Mammary epithelial cell (primary cell): ENCODE measurements at regions of chr1 and their contacts with region 1.

Region 1: GRCh38 chr1:74771913-74772515 is 39.1 kb downstream of the TYW3 start:
- DNase-seq: peak; percentile 30
- H3K4me3 ChIP-seq: no peak overlapping the region
- H3K27ac ChIP-seq: no peak overlapping the region
- H3K4me1 ChIP-seq: no peaks in the 10 kb centered on the region
- H3K27me3 ChIP-seq: no peaks in the 10 kb centered on the region
- CTCF ChIP-seq: peak; percentile 48 to 74

Region 2: DNA sequence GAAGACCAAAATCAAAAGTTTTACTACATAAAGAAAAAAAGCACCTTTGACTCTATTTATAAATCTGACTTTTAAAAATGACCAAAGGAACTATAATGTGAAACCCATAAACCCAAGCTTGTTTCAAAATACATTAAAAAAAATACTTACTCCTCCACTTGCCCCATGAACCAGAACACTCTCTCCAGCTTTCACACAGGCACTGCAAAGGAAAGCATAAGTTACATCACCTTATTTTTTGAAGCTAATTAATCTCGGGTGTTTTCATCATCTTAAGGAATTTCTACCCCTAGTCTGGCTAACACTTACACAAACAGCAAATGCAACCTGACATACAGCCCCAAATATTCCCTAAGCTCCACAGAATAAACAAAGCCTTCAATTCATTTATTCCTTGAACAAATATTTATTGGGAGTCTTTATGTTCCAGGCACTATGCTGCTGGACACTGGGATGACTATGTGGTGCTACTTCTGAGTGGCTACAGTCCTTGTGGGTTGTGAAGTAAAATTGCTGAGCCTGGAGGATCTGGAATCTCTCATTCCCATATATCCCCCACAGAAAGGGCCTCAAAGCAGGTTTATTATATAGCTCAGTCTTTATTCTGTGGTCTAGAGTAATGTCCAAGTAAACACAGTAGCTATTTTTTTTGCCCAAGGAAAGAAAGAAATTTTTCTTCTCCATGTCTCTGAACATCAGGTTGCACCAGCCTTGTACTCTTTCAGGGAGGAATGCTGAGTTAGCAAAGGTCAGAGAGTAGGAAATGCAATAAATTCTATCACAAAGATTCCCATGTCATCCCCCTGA is 57.4 kb before region 1 on chr1:
- CTCF ChIA-PET with region 1: no interaction called
- dilution Hi-C with region 1: no loop called
- in situ Hi-C with region 1: no loop called
- intact Hi-C with region 1: no loop called
- DNase-seq: no peak
- H3K4me3 ChIP-seq: no peak overlapping the region
- H3K27ac ChIP-seq: no peak overlapping the region
- H3K4me1 ChIP-seq: no peaks in the 10 kb centered on the region
- H3K27me3 ChIP-seq: no peaks in the 10 kb centered on the region
- CTCF ChIP-seq: no peak

Region 3: GRCh38 chr1:75188892-75189291 is 416.9 kb after region 1 on chr1:
- CTCF ChIA-PET with region 1: no interaction called
- dilution Hi-C with region 1: loop called (anchors 25 kb)
- in situ Hi-C with region 1: no loop called
- intact Hi-C with region 1: no loop called
- DNase-seq: no peak
- H3K4me3 ChIP-seq: no peak overlapping the region
- H3K27ac ChIP-seq: no peak overlapping the region
- H3K4me1 ChIP-seq: no peaks in the 10 kb centered on the region
- H3K27me3 ChIP-seq: no peaks in the 10 kb centered on the region
- CTCF ChIP-seq: no peak

Region 4: DNA sequence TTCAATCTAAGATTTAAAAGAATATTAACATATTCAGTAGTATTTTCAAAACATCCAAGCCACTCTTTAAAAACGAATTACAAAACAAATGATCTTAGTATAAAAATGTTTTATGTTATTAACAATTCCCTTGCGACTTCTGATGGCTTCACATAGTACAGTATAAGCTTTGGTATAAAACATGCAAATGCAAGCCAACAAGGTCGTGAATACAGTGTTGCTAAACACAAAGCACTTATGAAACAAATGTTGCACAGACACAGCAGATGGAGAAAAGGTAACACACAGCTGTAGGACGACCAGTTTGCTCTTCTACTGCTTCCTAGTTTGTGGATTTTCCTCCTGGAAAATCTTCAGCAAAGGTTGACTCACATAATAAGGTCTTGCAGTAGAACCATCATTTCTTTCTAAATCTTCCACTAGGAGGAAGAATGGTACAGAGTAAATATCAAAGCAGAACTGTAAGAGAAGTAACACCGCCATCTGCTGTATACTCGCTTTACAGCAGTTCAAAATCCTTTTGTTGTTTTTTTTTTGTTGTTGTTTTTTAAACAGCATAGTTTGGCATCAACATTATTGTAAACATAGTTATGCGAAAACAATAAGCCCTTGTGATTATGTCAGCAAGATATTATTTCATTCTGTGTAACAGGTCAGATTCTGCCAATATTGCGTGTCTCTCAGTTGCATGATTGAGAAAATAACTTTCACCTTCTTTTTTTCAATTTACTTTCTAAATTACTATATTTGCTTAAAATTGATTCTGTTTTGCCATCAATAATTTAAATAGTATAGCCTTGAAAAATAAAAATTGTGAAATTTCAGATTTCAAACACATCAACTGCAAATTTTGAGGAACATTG is 431.6 kb after region 1 on chr1:
- CTCF ChIA-PET with region 1: interaction called, 8 read pairs
- dilution Hi-C with region 1: loop called (anchors 25 kb)
- in situ Hi-C with region 1: loop called (anchors 5 to 25 kb)
- intact Hi-C with region 1: loop called (anchors 1 kb)
- DNase-seq: peak; percentile 19
- H3K4me3 ChIP-seq: no peak overlapping the region
- H3K27ac ChIP-seq: no peak overlapping the region
- H3K4me1 ChIP-seq: no peaks in the 10 kb centered on the region
- H3K27me3 ChIP-seq: no peaks in the 10 kb centered on the region
- CTCF ChIP-seq: peak; percentile 83 to 86

Region 5: GRCh38 chr1:75208862-75209261 is 436.8 kb after region 1 on chr1:
- CTCF ChIA-PET with region 1: no interaction called
- dilution Hi-C with region 1: no loop called
- in situ Hi-C with region 1: loop called (anchors 5 to 25 kb)
- intact Hi-C with region 1: no loop called
- DNase-seq: no peak
- H3K4me3 ChIP-seq: no peak overlapping the region
- H3K27ac ChIP-seq: no peak overlapping the region
- H3K4me1 ChIP-seq: no peaks in the 10 kb centered on the region
- H3K27me3 ChIP-seq: no peaks in the 10 kb centered on the region
- CTCF ChIP-seq: no peak